ENCODE measurements at regions of chr10 and their contacts with region 1.

Region 1: GRCh38 chr10:94320285-94320914 is 42.3 kb downstream of the NOC3L start:
- DNase-seq: peak; percentile 75
- H3K4me3 ChIP-seq: no peak overlapping the region
- H3K27ac ChIP-seq: no peak overlapping the region
- H3K4me1 ChIP-seq: no peaks in the 10 kb centered on the region
- H3K27me3 ChIP-seq: no peaks in the 10 kb centered on the region
- CTCF ChIP-seq: peak; percentile 61 to 76
- POLR2A ChIP-seq: no peak

Region 2: DNA sequence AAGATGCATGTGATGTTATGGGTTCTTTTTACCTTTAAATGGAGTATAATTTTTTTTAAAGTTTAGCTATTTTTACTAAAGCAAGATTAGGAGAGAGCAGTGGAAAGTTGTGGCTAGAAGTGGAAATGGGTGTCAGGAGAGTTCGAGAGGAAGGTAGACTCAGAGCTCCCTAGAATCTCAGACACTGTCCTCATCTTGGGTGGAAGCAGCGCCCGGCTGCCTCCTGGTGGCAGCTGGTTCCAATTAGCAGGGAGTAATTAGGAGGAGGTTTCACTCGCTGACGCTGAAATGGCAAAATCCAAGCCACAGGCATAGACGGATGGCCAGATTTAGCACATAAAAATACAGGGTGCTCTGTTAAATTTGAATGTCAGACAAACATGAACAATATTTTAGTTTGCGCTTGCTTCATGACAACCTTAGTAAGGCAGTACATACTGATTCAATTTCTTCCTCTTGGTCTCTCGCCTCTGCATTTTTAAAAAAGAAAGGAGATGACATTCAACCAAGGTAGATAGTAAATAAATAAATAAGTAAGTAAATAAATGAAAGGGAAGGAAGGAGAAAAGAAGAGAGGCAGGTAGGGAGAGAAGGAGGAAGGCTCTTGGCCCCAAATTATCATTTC is 504.2 kb before region 1 on chr10:
- CTCF ChIA-PET with region 1: interaction called, 49 read pairs
- POLR2A ChIA-PET with region 1: no interaction called
- dilution Hi-C with region 1: no loop called
- intact Hi-C with region 1: loop called (anchors 1 kb)
- DNase-seq: peak; percentile 44
- H3K4me3 ChIP-seq: no peak overlapping the region
- H3K27ac ChIP-seq: no peak overlapping the region
- H3K4me1 ChIP-seq: no peaks in the 10 kb centered on the region
- H3K27me3 ChIP-seq: peaks cover 22 to 24% of the 10 kb centered on the region in 2 experiments
- CTCF ChIP-seq: peak; percentile 51 to 70
- POLR2A ChIP-seq: no peak

Region 3: GRCh38 chr10:94279835-94280709 is 40.3 kb before region 1 on chr10:
- CTCF ChIA-PET with region 1: interaction called, 47 read pairs
- POLR2A ChIA-PET with region 1: no interaction called
- dilution Hi-C with region 1: no loop called
- intact Hi-C with region 1: loop called (anchors 1 kb)
- DNase-seq: peak; percentile 72
- H3K4me3 ChIP-seq: no peak overlapping the region
- H3K27ac ChIP-seq: no peak overlapping the region
- H3K4me1 ChIP-seq: no peaks in the 10 kb centered on the region
- H3K27me3 ChIP-seq: peaks cover 0 to 4% of the 10 kb centered on the region in 2 experiments
- CTCF ChIP-seq: peak; percentile 92 to 93
- POLR2A ChIP-seq: no peak

Region 4: DNA sequence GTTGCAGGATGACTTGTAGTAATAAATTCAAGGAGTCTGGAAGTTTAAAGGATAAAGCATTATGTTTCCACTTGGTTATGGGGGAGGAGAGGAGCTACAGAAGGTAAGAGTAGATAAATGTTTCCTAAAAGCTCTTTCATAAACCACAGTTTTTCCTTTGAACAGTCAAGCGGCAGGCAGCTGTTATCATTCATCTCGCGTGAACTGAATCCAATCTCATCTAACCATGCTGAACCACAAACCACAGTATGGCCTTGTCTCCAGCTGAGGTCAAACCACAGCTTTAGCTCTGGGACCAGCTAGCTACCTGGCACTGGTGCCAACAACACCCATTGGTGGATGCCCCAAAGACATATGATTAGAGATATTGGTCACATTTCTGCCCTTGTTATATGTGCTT is 21.0 kb before region 1 on chr10:
- CTCF ChIA-PET with region 1: interaction called, 12 read pairs
- POLR2A ChIA-PET with region 1: no interaction called
- dilution Hi-C with region 1: no loop called
- intact Hi-C with region 1: no loop called
- DNase-seq: no peak
- H3K4me3 ChIP-seq: no peak overlapping the region
- H3K27ac ChIP-seq: no peak overlapping the region
- H3K4me1 ChIP-seq: no peaks in the 10 kb centered on the region
- H3K27me3 ChIP-seq: peaks cover 3 to 9% of the 10 kb centered on the region in 2 experiments
- CTCF ChIP-seq: no peak
- POLR2A ChIP-seq: no peak

Region 5: DNA sequence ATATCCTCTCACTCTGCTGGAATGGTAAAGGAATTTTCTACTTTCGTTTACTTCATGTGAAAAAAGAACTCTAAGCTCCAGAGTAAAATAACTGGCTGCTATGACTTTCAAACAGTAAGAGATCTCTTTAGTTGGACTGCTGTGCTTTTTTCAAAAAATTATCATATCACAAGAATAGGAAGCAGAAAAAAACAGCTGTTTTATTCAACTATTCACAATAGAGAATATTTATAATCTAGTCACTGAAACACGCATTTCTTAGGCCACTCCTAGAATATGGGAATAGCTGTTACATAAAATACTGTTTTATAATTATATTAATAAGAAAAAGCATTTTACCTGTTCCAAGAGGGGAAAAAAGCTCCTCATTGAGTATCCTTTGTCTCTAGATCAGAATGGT is 12.7 kb after region 1 on chr10:
- CTCF ChIA-PET with region 1: interaction called, 46 read pairs
- POLR2A ChIA-PET with region 1: no interaction called
- dilution Hi-C with region 1: no loop called
- intact Hi-C with region 1: no loop called
- DNase-seq: no peak
- H3K4me3 ChIP-seq: no peak overlapping the region
- H3K27ac ChIP-seq: no peak overlapping the region
- H3K4me1 ChIP-seq: no peaks in the 10 kb centered on the region
- H3K27me3 ChIP-seq: no peaks in the 10 kb centered on the region
- CTCF ChIP-seq: no peak
- POLR2A ChIP-seq: no peak

Region 6: DNA sequence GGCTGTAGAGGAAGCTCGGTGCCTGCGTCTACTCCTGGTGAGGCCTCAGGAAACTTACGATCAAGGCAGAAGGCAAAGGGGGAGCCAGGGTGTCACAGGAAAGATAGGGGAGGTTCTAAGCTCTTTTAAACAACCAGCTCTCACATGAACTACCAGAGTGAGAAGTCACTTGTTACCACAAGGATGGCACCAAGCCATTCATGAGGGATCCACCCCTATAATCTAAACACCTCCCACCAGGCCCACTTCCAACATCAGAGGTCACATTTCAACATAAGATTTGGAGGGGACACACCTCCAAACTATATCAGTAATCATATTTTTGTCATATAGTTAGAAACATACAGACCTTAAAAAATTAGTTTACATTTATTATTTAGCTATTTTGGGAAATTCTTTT is 32.9 kb after region 1 on chr10:
- CTCF ChIA-PET with region 1: interaction called, 13 read pairs
- POLR2A ChIA-PET with region 1: no interaction called
- dilution Hi-C with region 1: no loop called
- intact Hi-C with region 1: no loop called
- DNase-seq: no peak
- H3K4me3 ChIP-seq: no peak overlapping the region
- H3K27ac ChIP-seq: no peak overlapping the region
- H3K4me1 ChIP-seq: no peaks in the 10 kb centered on the region
- H3K27me3 ChIP-seq: no peaks in the 10 kb centered on the region
- CTCF ChIP-seq: no peak
- POLR2A ChIP-seq: no peak

Region 7: DNA sequence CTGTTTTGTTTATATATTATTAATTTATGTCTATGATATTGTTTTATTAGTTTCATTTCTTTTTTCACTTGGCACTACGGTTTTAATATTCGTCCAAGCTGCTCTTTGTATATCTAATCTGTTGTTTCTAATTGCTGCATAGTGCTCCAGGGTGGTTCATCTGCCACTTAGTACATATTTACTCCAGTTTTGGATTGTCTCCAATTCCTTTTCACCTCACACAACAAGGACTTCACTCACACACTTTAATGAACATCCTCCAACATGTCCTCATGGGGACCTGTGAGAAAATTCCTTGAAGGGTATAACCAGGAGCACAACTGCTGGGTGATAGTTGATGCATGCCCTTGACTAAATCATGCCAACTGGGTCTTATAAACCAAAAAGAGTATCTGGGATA is 56.5 kb after region 1 on chr10:
- CTCF ChIA-PET with region 1: no interaction called
- POLR2A ChIA-PET with region 1: no interaction called
- dilution Hi-C with region 1: no loop called
- intact Hi-C with region 1: no loop called
- DNase-seq: no peak
- H3K4me3 ChIP-seq: no peak overlapping the region
- H3K27ac ChIP-seq: no peak overlapping the region
- H3K4me1 ChIP-seq: no peaks in the 10 kb centered on the region
- H3K27me3 ChIP-seq: peaks cover 0 to 2% of the 10 kb centered on the region in 2 experiments
- CTCF ChIP-seq: no peak
- POLR2A ChIP-seq: no peak